Panc1 (cell line): ENCODE measurements at regions of chr17 and their contacts with region 1.

Region 1: DNA sequence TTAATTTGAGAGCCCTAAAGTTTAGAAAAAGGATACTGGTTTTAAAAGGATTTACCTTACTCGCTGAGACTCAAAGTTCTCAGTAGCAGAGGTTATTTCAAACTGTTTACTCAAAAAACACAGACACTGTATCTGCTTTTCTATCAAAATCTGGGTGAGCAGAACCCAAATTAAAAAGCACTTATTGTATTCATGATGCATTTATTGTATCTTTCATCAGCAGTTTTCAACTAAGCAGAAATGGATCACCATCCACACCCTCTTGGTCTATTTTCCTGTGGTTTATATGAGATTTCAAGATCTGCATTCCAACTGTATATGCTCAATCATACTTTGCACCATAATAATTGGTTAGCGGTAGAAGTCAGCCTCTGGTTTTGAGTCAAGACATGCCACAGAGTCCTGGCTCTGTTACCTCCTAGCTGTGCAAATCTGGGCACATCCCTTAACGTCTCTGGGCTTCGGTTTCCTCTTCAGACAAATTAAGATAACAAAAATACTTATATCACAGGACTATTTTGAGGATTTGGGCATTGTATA is 109.5 kb downstream of the ASIC2 start:
- DNase-seq: no peak
- ATAC-seq: no peak
- H3K4me3 ChIP-seq: no peak overlapping the region
- H3K27ac ChIP-seq: no peak overlapping the region
- H3K4me1 ChIP-seq: no peaks in the 10 kb centered on the region
- H3K27me3 ChIP-seq: no peaks in the 10 kb centered on the region
- CTCF ChIP-seq: no peak

Region 2: GRCh38 chr17:33028778-33029177 is 154.8 kb before region 1 on chr17:
- CTCF ChIA-PET with region 1: no interaction called
- POLR2A ChIA-PET with region 1: no interaction called
- in situ Hi-C with region 1: no loop called
- intact Hi-C with region 1: no loop called
- DNase-seq: no peak
- ATAC-seq: 0 out of 2 replicates have a peak, but pooled peaks have one; percentile 66
- H3K4me3 ChIP-seq: no peak overlapping the region
- H3K27ac ChIP-seq: no peak overlapping the region
- H3K4me1 ChIP-seq: no peaks in the 10 kb centered on the region
- H3K27me3 ChIP-seq: no peaks in the 10 kb centered on the region
- CTCF ChIP-seq: 0 out of 2 replicates have a peak, but pooled peaks have one; percentile 41

Region 3: DNA sequence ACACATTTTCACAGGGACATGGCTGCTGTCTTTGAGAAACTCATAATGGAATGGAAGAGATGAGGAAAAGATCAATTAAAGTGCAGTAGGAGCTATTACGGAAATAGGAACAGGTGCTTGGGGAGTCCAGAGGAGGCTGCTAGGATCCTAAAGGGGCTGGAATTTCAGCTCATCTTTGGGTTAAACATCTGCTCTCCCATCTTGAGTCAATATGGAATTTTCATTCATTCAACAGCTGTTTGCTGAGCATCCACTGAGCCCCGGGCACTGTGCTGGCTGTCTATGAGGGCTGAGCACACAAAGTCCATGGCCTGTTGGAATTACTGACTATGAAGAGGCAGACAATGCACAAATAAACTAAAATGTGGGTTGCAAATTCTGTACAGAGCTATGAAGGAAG is 61.6 kb after region 1 on chr17:
- CTCF ChIA-PET with region 1: no interaction called
- POLR2A ChIA-PET with region 1: no interaction called
- in situ Hi-C with region 1: no loop called
- intact Hi-C with region 1: loop called (anchors 2 kb)
- DNase-seq: no peak
- ATAC-seq: no peak
- H3K4me3 ChIP-seq: no peak overlapping the region
- H3K27ac ChIP-seq: no peak overlapping the region
- H3K4me1 ChIP-seq: peaks cover 6% of the 10 kb centered on the region
- H3K27me3 ChIP-seq: no peaks in the 10 kb centered on the region
- CTCF ChIP-seq: no peak